CD8-positive, alpha-beta memory T cell (primary cell): ENCODE measurements at regions of chr21 and their contacts with region 1.

Region 1: DNA sequence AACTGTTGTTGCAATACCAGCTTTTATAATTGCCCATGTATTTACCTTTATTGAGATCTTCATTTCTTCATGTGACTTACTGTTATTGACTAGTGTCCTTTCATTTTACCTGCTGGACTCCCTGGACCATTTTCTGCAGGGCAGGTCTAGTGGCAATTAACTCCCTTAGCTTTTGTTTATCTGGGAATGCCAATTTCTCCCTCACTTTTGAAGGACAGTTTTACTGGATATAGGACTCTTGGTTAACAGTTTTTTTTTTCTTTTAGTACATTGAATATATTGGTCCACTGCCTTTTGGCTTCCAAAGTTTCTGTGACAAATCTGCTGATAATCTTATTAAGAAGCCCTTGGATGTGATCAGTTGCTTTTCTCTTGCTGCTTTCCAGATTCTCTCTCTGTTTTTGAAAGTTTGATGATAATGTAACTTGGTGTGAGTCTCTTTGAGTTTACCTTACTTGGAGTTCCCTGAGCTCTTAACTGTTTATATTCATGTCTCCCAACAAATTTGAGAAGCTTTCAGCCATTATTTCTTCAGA is 56.9 kb downstream of the COL18A1 start:
- DNase-seq: no peak
- H3K4me3 ChIP-seq: no peak overlapping the region
- H3K4me3 Mint-ChIP-seq: no peak overlapping the region
- H3K27ac ChIP-seq: no peak overlapping the region
- H3K27ac Mint-ChIP-seq: no peak overlapping the region
- H3K4me1 ChIP-seq: no peaks in the 10 kb centered on the region
- H3K4me1 Mint-ChIP-seq: no peaks in the 10 kb centered on the region
- H3K27me3 ChIP-seq: no peaks in the 10 kb centered on the region
- H3K27me3 Mint-ChIP-seq: peaks cover 13 to 15% of the 10 kb centered on the region in 2 donors

Region 2: DNA sequence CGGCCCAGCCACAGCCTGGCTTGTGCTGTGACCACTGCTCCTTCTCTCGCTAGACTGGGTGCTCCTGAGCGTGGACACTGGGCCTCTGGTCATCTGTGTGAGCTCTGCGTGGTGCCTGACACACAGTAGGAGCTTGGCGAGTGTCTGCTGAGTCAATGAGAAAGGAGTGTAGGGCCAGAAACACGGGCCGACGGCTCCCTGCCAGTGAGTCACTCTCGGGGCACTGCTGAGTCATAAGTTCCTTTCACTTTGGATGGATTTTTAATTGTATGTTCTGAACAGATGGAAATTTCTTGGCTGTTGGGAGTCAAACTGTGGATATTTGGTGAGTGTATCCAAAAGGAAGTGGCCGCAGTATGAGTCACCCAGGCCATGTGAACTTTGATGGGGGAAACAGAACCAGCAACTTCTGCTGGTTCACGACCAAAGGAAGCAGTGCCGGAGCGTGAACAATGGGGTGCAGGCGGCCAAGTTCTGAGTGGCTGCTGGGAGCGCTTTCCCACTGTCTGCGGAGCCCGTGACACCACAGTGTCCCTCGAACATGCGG is 97.9 kb before region 1 on chr21:
- CTCF ChIA-PET with region 1: no interaction called
- POLR2A ChIA-PET with region 1: no interaction called
- DNase-seq: no peak
- H3K4me3 ChIP-seq: no peak overlapping the region
- H3K4me3 Mint-ChIP-seq: peak overlapping the region in 2 of 7 donors; percentile 44 to 62
- H3K27ac ChIP-seq: peak overlapping the region; percentile 31
- H3K27ac Mint-ChIP-seq: peak overlapping the region in 4 of 8 donors; percentile 48 to 69 (median 52)
- H3K4me1 ChIP-seq: no peaks in the 10 kb centered on the region
- H3K4me1 Mint-ChIP-seq: peaks cover 4 to 10% (median 9%) of the 10 kb centered on the region in 3 donors
- H3K27me3 ChIP-seq: no peaks in the 10 kb centered on the region
- H3K27me3 Mint-ChIP-seq: peaks cover 11 to 22% of the 10 kb centered on the region in 2 donors

Region 3: DNA sequence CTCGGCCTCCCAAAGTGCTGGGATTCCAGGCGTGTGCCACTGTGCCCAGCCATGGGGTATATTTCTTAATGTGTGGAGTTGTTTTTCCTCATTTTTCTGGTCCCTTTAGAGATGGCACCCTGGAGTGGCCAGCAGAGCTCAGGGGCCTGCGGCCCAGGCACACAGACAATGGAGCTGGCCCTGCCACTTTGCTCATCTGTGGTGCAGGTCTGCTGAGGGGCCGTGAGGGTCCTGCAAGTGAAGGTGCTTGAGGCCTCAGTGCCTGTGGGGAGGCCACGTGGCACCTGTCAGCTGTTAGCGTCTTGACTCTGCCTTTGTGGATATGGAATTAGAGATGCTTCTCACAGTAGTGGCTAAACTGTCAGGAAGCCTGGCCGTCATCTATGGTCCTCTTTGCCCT is 49.4 kb before region 1 on chr21:
- CTCF ChIA-PET with region 1: no interaction called
- POLR2A ChIA-PET with region 1: interaction called, 10 read pairs
- DNase-seq: peak in 1 of 5 donors; percentile 33
- H3K4me3 ChIP-seq: no peak overlapping the region
- H3K4me3 Mint-ChIP-seq: no peak overlapping the region
- H3K27ac ChIP-seq: peak overlapping the region; percentile 31
- H3K27ac Mint-ChIP-seq: no peak overlapping the region
- H3K4me1 ChIP-seq: no peaks in the 10 kb centered on the region
- H3K4me1 Mint-ChIP-seq: no peaks in the 10 kb centered on the region
- H3K27me3 ChIP-seq: no peaks in the 10 kb centered on the region
- H3K27me3 Mint-ChIP-seq: peaks cover 14 to 32% of the 10 kb centered on the region in 2 donors

Region 4: DNA sequence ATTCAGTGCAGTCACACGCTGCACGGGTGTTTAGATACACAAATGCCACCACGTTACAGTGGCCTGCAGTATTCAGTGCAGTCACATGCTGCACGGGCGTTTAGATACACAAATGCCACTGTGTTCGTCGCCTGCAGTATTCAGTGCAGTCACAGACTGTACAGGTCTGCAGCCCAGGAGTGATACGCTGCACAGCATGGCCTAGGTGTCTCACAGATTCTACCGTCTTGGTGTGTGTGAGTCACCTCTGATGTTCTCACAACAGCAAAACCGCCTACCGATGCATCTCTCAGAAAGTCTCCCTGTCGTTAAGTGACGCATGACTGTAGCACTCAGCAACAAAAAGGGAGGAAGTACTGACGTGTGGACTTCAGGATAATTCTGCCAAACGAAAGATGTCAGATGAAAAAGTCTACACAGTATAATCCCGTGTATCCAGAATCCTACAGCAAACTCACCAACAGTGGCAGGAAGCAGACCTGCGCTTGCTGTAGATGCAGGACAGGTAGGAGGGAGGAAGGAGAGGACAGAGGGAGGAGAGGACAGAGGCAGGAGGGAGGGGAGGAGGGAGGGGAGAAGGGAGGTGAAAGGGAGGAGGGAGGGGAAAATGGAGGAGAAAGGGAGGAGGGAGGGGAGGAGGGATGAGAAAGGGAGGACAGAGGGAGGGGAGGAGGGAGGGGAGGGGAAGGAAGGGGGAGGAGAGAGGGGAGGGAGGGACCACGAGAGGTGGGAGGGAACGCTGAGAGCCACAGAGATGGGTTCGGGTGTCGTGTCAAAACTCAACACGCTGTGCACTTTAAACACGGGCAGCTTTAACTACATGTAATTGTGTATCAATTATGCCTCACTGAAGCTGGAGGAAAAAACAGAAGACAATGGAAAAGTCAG is 145.4 kb after region 1 on chr21:
- CTCF ChIA-PET with region 1: no interaction called
- POLR2A ChIA-PET with region 1: no interaction called
- DNase-seq: no peak
- H3K4me3 ChIP-seq: no peak overlapping the region
- H3K4me3 Mint-ChIP-seq: peak overlapping the region in 1 of 7 donors; percentile 30
- H3K27ac ChIP-seq: no peak overlapping the region
- H3K27ac Mint-ChIP-seq: peak overlapping the region in 6 of 8 donors; percentile 24 to 81 (median 58)
- H3K4me1 ChIP-seq: peaks cover 9% of the 10 kb centered on the region
- H3K4me1 Mint-ChIP-seq: peaks cover 0 to 3% (median 2%) of the 10 kb centered on the region in 3 donors
- H3K27me3 ChIP-seq: no peaks in the 10 kb centered on the region
- H3K27me3 Mint-ChIP-seq: peaks cover 14 to 15% of the 10 kb centered on the region in 2 donors